Dendritic cell treated with granulocyte-macrophage colony-stimulating factor and Interleukin-4, amounts not matched to agents 40 ng/mL and 50 ng/mL, for 4 days (primary cell): ENCODE measurements at regions of chr1 and their contacts with region 1.

Region 1: GRCh38 chr1:160261893-160262794 is at the start of gene DCAF8:
- H3K4me3 Mint-ChIP-seq: peak within 1 kb of the TSS; percentile 95
- H3K27ac Mint-ChIP-seq: peak within 1 kb of the TSS; percentile 99
- H3K4me1 Mint-ChIP-seq: peaks cover 30% of the 10 kb centered on the region
- H3K27me3 Mint-ChIP-seq: peaks cover 3% of the 10 kb centered on the region

Region 2: DNA sequence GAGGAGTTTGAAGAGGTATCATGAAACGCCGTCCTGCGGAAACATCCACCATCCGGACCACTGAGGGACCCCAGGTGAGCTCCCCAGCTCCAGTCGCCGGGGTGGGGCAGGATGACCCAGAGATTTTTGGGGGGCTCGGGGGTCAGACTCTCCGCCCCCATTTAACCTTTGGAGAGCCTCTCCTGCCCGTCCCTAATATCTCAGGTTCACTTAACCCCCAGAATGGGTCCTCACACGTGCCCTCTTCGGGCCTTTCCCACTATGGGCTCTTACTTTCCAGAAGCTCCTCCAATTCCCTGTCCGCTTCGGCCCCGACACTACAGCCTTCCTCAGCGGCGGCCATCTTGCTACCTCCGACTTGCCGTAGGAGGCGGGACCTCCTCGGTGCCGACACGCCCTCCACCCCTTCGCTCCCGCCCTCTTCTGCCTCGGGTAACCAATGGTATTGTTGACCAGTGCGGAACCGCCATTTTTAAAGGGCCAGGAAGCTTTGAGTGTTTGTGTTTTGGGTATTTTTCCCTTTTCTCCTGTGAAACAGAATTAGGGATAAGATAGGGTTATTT is 22.7 kb after region 1 on chr1 and contains the start of gene PEX19:
- intact Hi-C with region 1: loop called (anchors 1 kb)
- H3K4me3 Mint-ChIP-seq: peak within 1 kb of the TSS; percentile 99
- H3K27ac Mint-ChIP-seq: peak within 1 kb of the TSS; percentile 93
- H3K4me1 Mint-ChIP-seq: peaks cover 25% of the 10 kb centered on the region
- H3K27me3 Mint-ChIP-seq: no peaks in the 10 kb centered on the region